ENCODE measurements at regions of chr1 and their contacts with region 1.

Region 1: GRCh38 chr1:23184212-23184934 is 15.7 kb upstream of the LUZP1 start:
- DNase-seq: peak in 22 of 35 experiments; percentile 7 to 78 (median 30)
- ATAC-seq: peak; percentile 36 to 57 (median 50)
- H3K4me3 ChIP-seq: peak overlapping the region in 1 of 2 donors; percentile 23
- H3K4me3 Mint-ChIP-seq: peak overlapping the region; percentile 66 to 72 (median 69)
- H3K27ac ChIP-seq: no peak overlapping the region
- H3K27ac Mint-ChIP-seq: peak overlapping the region; percentile 49 to 56
- H3K4me1 ChIP-seq: peaks cover 0 to 8% of the 10 kb centered on the region in 2 experiments
- H3K4me1 Mint-ChIP-seq: peaks cover 5 to 11% (median 11%) of the 10 kb centered on the region in 3 donors
- H3K27me3 ChIP-seq: peaks cover 0 to 3% of the 10 kb centered on the region in 2 experiments
- H3K27me3 Mint-ChIP-seq: peaks cover 0 to 6% of the 10 kb centered on the region in 2 donors

Region 2: GRCh38 chr1:23111600-23112535 is 72.5 kb before region 1 on chr1:
- CTCF ChIA-PET with region 1: interaction called, 7 to 19 read pairs
- POLR2A ChIA-PET with region 1: interaction called in 1 of 2 experiments, 7 read pairs
- DNase-seq: no peak
- ATAC-seq: no peak
- H3K4me3 ChIP-seq: no peak overlapping the region
- H3K4me3 Mint-ChIP-seq: no peak overlapping the region
- H3K27ac ChIP-seq: peak overlapping the region; percentile 68
- H3K27ac Mint-ChIP-seq: peak overlapping the region; percentile 40 to 44
- H3K4me1 ChIP-seq: peaks cover 4 to 37% of the 10 kb centered on the region in 2 experiments
- H3K4me1 Mint-ChIP-seq: peaks cover 63 to 80% (median 77%) of the 10 kb centered on the region in 3 donors
- H3K27me3 ChIP-seq: no peaks in the 10 kb centered on the region
- H3K27me3 Mint-ChIP-seq: no peaks in the 10 kb centered on the region

Region 3: GRCh38 chr1:23118957-23119792 is 65.2 kb before region 1 on chr1:
- CTCF ChIA-PET with region 1: interaction called, 6 to 25 read pairs
- POLR2A ChIA-PET with region 1: interaction called, 4 to 7 read pairs
- DNase-seq: peak in 34 of 35 experiments; percentile 19 to 62 (median 46)
- ATAC-seq: peak; percentile 62 to 87 (median 70)
- H3K4me3 ChIP-seq: peak overlapping the region in 1 of 2 donors; percentile 12
- H3K4me3 Mint-ChIP-seq: peak overlapping the region; percentile 51 to 74 (median 60)
- H3K27ac ChIP-seq: peak overlapping the region; percentile 90
- H3K27ac Mint-ChIP-seq: peak overlapping the region; percentile 89
- H3K4me1 ChIP-seq: peaks cover 5 to 33% of the 10 kb centered on the region in 2 experiments
- H3K4me1 Mint-ChIP-seq: peaks cover 58 to 74% (median 69%) of the 10 kb centered on the region in 3 donors
- H3K27me3 ChIP-seq: no peaks in the 10 kb centered on the region
- H3K27me3 Mint-ChIP-seq: no peaks in the 10 kb centered on the region

Measured in T-cell (primary cell).